ENCODE measurements at regions of chr16 and their contacts with region 1.

Region 1: DNA sequence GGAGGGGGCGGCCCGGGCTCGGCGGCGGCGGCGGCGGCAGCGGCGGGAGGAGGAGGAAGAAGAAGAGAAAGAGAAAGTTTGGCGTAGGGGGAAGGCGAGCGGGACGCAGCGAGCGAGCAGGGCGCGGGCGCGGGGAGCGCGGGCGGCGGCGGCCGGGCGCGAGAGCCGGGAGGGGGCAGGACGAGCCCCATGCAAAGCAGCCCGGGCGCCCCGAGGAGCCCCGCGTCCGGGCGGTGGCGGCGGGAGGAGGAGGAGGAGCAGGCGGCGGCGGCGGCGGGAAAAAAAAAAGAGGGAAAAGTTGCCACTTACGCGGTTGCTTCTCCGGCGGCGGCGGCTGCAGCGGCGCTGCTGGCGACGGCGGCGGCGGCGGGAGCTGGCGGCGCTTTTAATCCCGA is 10.3 kb upstream of the ZFHX3 start:
- DNase-seq: peak in 1 of 2 donors; percentile 63
- ATAC-seq: peak in 2 of 8 donors; percentile 34 to 45
- H3K4me3 ChIP-seq: peak overlapping the region; percentile 38 to 88 (median 74)
- H3K27ac ChIP-seq: peak overlapping the region; percentile 81 to 99 (median 95)
- H3K4me1 ChIP-seq: peaks cover 0 to 55% (median 38%) of the 10 kb centered on the region in 9 donors
- H3K27me3 ChIP-seq: peaks cover 0 to 28% (median 25%) of the 10 kb centered on the region in 7 donors
- CTCF ChIP-seq: peak in 2 of 9 donors; percentile 23 to 33

Region 2: GRCh38 chr16:72664509-72665225 is 393.6 kb before region 1 on chr16:
- intact Hi-C with region 1: loop called in 2 of 10 experiments (anchors 10 kb)
- DNase-seq: peak; percentile 88 to 98
- ATAC-seq: peak; percentile 100
- H3K4me3 ChIP-seq: peak overlapping the region; percentile 67 to 93 (median 74)
- H3K27ac ChIP-seq: peak overlapping the region in 4 of 10 donors; percentile 24 to 87 (median 32)
- H3K4me1 ChIP-seq: peaks cover 0 to 19% (median 10%) of the 10 kb centered on the region in 9 donors
- H3K27me3 ChIP-seq: peaks cover 0 to 4% (median 0%) of the 10 kb centered on the region in 7 donors
- CTCF ChIP-seq: peak in 1 of 9 donors; percentile 22

Region 3: GRCh38 chr16:72832621-72833248 is 225.5 kb before region 1 on chr16:
- intact Hi-C with region 1: loop called in 4 of 10 experiments (anchors 5 to 10 kb)
- DNase-seq: peak; percentile 81 to 86
- ATAC-seq: peak; percentile 82 to 93 (median 92)
- H3K4me3 ChIP-seq: no peak overlapping the region
- H3K27ac ChIP-seq: peak overlapping the region in 5 of 10 donors; percentile 6 to 45 (median 27)
- H3K4me1 ChIP-seq: peaks cover 0 to 28% (median 11%) of the 10 kb centered on the region in 9 donors
- H3K27me3 ChIP-seq: no peaks in the 10 kb centered on the region
- CTCF ChIP-seq: peak; percentile 90 to 99 (median 95)

Region 4: GRCh38 chr16:72894293-72895151 is 163.7 kb before region 1 on chr16:
- intact Hi-C with region 1: loop called in 1 of 10 experiments (anchors 5 kb)
- DNase-seq: peak in 1 of 2 donors; percentile 58
- ATAC-seq: peak; percentile 60 to 84 (median 72)
- H3K4me3 ChIP-seq: peak overlapping the region in 1 of 10 donors; percentile 11
- H3K27ac ChIP-seq: peak overlapping the region in 9 of 10 donors; percentile 3 to 70 (median 57)
- H3K4me1 ChIP-seq: peaks cover 0 to 40% (median 18%) of the 10 kb centered on the region in 9 donors
- H3K27me3 ChIP-seq: no peaks in the 10 kb centered on the region
- CTCF ChIP-seq: no peak

Region 5: DNA sequence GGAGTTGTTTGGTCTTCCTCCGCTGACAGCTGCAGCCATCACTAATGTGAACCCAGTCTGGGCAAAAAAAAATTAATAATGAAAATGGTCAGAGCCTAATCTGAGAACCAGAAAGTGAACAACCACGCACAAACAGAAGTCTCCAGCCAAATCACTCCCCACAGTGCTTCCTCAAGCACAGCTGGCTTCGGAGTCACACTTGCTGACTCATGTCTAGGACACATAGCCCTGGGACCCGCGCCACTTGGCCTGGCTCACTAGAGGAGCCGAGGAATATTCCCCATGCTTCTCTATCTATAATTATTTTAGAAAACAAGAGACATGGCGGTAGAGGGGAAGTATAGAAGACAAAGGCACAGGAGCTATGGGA is 119.4 kb before region 1 on chr16:
- intact Hi-C with region 1: loop called in 1 of 10 experiments (anchors 5 kb)
- DNase-seq: peak; percentile 83 to 91
- ATAC-seq: peak; percentile 94 to 98 (median 96)
- H3K4me3 ChIP-seq: peak overlapping the region in 4 of 10 donors; percentile 15 to 29 (median 24)
- H3K27ac ChIP-seq: peak overlapping the region; percentile 57 to 90 (median 81)
- H3K4me1 ChIP-seq: peaks cover 15 to 63% (median 44%) of the 10 kb centered on the region in 9 donors
- H3K27me3 ChIP-seq: no peaks in the 10 kb centered on the region
- CTCF ChIP-seq: no peak

Region 6: GRCh38 chr16:72989579-72990551 is 68.4 kb before region 1 on chr16:
- intact Hi-C with region 1: loop called in 1 of 10 experiments (anchors 5 kb)
- DNase-seq: peak; percentile 36 to 51
- ATAC-seq: peak in 7 of 8 donors; percentile 22 to 77 (median 44)
- H3K4me3 ChIP-seq: peak overlapping the region in 3 of 10 donors; percentile 10 to 18 (median 17)
- H3K27ac ChIP-seq: peak overlapping the region; percentile 36 to 74 (median 62)
- H3K4me1 ChIP-seq: peaks cover 22 to 90% (median 69%) of the 10 kb centered on the region in 9 donors
- H3K27me3 ChIP-seq: no peaks in the 10 kb centered on the region
- CTCF ChIP-seq: no peak

Region 7: DNA sequence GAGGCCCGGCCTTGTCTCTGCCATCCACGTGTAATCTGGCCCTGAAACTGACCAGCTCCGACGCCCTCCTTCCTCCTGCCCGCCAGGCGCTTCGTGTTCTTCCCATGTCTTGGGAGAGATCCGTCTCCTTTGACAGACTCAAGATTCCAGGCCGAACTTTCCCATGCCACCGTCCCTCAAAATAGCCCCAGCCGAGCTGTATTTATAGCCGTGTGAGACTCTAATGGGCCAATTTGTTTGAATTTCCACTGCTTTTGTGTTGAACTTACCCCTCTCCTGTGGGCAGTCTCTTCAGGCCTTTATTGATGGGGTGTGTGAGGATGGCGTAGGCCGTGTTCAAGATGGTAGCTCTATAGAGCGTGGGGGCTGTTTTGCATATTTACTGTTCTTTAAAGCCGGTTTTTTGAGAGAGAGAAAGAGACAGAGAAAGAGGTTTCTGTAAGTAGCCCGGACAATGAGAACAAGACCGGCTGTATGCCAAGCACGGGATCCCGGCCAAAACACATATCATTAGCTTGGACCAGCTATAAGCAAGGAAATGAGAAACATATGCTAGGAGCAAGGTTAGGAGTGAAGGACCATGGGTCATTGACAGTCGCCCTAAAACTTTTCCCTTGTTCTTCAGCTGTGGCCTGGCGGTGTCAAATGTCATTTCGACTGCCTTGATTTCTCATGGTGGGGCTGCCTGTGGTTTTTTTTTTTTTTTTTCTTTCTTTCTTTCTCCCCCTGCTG is 114.2 kb after region 1 on chr16:
- intact Hi-C with region 1: loop called in 4 of 10 experiments (anchors 5 to 10 kb)
- DNase-seq: peak; percentile 82 to 86
- ATAC-seq: peak; percentile 68 to 87 (median 78)
- H3K4me3 ChIP-seq: peak overlapping the region in 1 of 10 donors; percentile 1
- H3K27ac ChIP-seq: peak overlapping the region; percentile 41 to 86 (median 70)
- H3K4me1 ChIP-seq: peaks cover 0 to 42% (median 16%) of the 10 kb centered on the region in 9 donors
- H3K27me3 ChIP-seq: no peaks in the 10 kb centered on the region
- CTCF ChIP-seq: peak in 8 of 9 donors; percentile 5 to 50 (median 36)

Measured in heart right ventricle (tissue), 16 donors.